ENCODE measurements at regions of chr12 and their contacts with region 1.

Region 1: GRCh38 chr12:31959161-31959700 is at the start of gene RESF1:
- DNase-seq: peak; percentile 88
- H3K4me3 Mint-ChIP-seq: peak within 1 kb of the TSS; percentile 94
- H3K27ac Mint-ChIP-seq: peak within 1 kb of the TSS; percentile 99
- H3K4me1 Mint-ChIP-seq: peaks cover 66% of the 10 kb centered on the region
- H3K27me3 Mint-ChIP-seq: no peaks in the 10 kb centered on the region
- total RNA-seq, gene RESF1: 65.6 to 73.5 TPM

Region 2: GRCh38 chr12:31440586-31440985 is 518.6 kb before region 1 on chr12:
- CTCF ChIA-PET with region 1: no interaction called
- intact Hi-C with region 1: no loop called
- DNase-seq: no peak
- H3K4me3 Mint-ChIP-seq: no peak overlapping the region
- H3K27ac Mint-ChIP-seq: no peak overlapping the region
- H3K4me1 Mint-ChIP-seq: no peaks in the 10 kb centered on the region
- H3K27me3 Mint-ChIP-seq: peaks cover 2% of the 10 kb centered on the region

Region 3: GRCh38 chr12:31659087-31659933 is 299.9 kb before region 1 on chr12 and contains the start of gene ETFBKMT:
- CTCF ChIA-PET with region 1: no interaction called
- intact Hi-C with region 1: loop called (anchors 1 kb)
- DNase-seq: peak; percentile 96
- H3K4me3 Mint-ChIP-seq: peak within 1 kb of the TSS; percentile 94
- H3K27ac Mint-ChIP-seq: peak within 1 kb of the TSS; percentile 98
- H3K4me1 Mint-ChIP-seq: peaks cover 11% of the 10 kb centered on the region
- H3K27me3 Mint-ChIP-seq: no peaks in the 10 kb centered on the region
- total RNA-seq, gene ETFBKMT: 0.91 to 1.2 TPM

Region 4: GRCh38 chr12:31804185-31804504 is 155.1 kb before region 1 on chr12:
- CTCF ChIA-PET with region 1: no interaction called
- intact Hi-C with region 1: loop called (anchors 2 kb)
- DNase-seq: no peak
- H3K4me3 Mint-ChIP-seq: peak overlapping the region; percentile 78
- H3K27ac Mint-ChIP-seq: peak overlapping the region; percentile 87
- H3K4me1 Mint-ChIP-seq: peaks cover 51% of the 10 kb centered on the region
- H3K27me3 Mint-ChIP-seq: no peaks in the 10 kb centered on the region

Region 5: DNA sequence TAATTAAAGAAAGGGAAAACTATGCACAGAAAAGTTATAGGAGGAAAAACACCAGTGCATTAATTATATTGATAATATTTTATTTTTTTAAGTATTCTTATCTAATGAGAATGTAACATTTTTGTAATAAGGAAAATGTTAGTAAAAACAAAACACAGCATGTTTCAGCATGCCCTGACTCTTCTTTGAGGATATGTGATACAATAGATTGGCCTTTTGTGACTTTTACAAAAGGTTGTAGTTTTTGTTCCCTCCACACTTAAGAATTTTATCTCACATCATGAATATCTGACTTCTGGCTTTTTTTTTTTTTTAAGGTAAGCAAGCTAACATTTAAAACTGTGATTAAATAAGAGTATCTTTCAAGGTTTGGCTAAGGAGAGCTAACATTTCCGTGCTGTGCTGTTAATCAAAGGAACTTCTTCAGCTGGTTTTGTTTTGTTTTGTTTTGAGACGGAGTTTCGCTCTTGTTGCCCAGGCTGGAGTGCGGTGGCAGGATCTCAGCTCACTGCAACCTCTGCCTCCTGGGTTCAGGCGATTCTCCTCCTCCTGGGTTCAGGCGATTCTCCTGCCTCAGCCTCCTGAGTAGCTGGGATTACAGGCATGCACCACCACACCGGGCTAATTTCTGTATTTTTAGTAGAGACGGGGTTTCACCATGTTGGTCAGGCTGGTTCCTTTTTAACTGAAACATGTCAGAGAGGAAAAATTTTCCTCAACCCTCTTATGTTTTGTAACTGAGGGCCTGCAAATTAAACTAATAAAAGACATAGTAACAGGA is 30.8 kb before region 1 on chr12:
- CTCF ChIA-PET with region 1: interaction called, 10 read pairs
- intact Hi-C with region 1: loop called (anchors 1 kb)
- DNase-seq: peak; percentile 49
- H3K4me3 Mint-ChIP-seq: peak overlapping the region; percentile 78
- H3K27ac Mint-ChIP-seq: peak overlapping the region; percentile 97
- H3K4me1 Mint-ChIP-seq: peaks cover 38% of the 10 kb centered on the region
- H3K27me3 Mint-ChIP-seq: no peaks in the 10 kb centered on the region

Region 6: DNA sequence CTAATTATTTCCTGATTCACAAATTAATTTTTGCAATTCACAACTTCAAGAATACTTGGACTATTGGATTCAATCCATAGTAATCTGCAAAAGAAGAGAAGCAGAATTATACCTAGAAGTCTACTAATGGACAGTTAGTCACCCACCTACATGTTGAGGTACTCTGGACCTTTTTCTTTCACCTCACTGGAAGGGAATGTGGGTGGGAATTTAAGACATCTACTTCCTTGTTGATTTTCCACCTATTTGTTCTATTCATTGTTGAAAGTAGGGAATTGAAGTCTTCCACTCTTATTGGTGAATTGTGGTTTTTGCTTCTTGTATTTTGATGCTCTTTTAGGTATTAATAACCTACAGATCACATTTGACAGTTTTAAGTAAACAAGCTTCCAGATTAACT is 11.0 kb after region 1 on chr12:
- CTCF ChIA-PET with region 1: no interaction called
- intact Hi-C with region 1: no loop called
- DNase-seq: no peak
- H3K4me3 Mint-ChIP-seq: no peak overlapping the region
- H3K27ac Mint-ChIP-seq: peak overlapping the region; percentile 73
- H3K4me1 Mint-ChIP-seq: peaks cover 47% of the 10 kb centered on the region
- H3K27me3 Mint-ChIP-seq: no peaks in the 10 kb centered on the region

Region 7: GRCh38 chr12:32062881-32063280 is 103.7 kb after region 1 on chr12:
- CTCF ChIA-PET with region 1: no interaction called
- intact Hi-C with region 1: loop called (anchors 1 kb)
- DNase-seq: no peak
- H3K4me3 Mint-ChIP-seq: no peak overlapping the region
- H3K27ac Mint-ChIP-seq: no peak overlapping the region
- H3K4me1 Mint-ChIP-seq: peaks cover 11% of the 10 kb centered on the region
- H3K27me3 Mint-ChIP-seq: no peaks in the 10 kb centered on the region

Region 8: GRCh38 chr12:32312049-32312670 is 352.9 kb after region 1 on chr12:
- CTCF ChIA-PET with region 1: interaction called, 4 read pairs
- intact Hi-C with region 1: loop called (anchors 2 kb)
- DNase-seq: no peak
- H3K4me3 Mint-ChIP-seq: no peak overlapping the region
- H3K27ac Mint-ChIP-seq: no peak overlapping the region
- H3K4me1 Mint-ChIP-seq: peaks cover 2% of the 10 kb centered on the region
- H3K27me3 Mint-ChIP-seq: no peaks in the 10 kb centered on the region

Region 9: DNA sequence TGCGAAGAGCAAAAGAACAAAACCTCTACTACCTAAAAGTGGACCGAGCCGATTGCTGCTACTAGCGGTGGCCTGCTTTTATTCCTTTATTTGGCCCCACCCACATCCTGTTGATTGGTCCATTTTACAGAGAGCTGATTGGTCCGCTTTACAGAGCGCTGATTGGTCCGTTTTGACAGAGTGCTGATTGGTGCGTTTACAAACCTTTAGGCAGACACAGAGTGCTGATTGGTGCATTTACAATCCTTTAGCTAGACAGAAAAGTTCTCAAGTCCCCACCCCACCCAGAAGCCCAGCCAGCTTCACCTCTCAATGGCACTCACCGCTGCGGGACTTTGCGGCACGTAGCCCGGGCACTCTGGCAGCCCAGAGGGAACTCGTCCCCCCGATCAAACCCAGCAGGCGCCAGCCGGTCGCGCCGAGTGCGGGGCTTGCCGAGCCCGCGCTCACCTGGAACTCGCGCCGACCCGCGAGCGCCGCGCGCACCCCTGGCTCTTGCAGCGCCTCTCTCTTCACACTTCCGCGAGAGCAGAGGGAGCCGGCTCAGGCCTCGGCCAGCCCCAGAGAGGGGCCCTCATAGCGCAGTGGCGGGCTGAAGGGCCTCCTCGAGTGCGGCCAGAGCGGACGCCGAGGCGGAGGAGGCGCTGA is 431.5 kb after region 1 on chr12:
- CTCF ChIA-PET with region 1: no interaction called
- intact Hi-C with region 1: no loop called
- DNase-seq: peak; percentile 47
- H3K4me3 Mint-ChIP-seq: peak overlapping the region; percentile 66
- H3K27ac Mint-ChIP-seq: peak overlapping the region; percentile 7
- H3K4me1 Mint-ChIP-seq: peaks cover 3% of the 10 kb centered on the region
- H3K27me3 Mint-ChIP-seq: peaks cover 17% of the 10 kb centered on the region

Measured in activated naive CD4-positive, alpha-beta T cell treated with anti-CD3 and anti-CD28 coated beads for 36 hours (primary cell).